CD14-positive monocyte (primary cell): ENCODE measurements at regions of chr18 and their contacts with region 1.

Region 1: GRCh38 chr18:48767090-48767690 is 183.6 kb downstream of the SMAD7 start:
- DNase-seq: no peak
- H3K4me3 ChIP-seq: no peak overlapping the region
- H3K4me3 Mint-ChIP-seq: no peak overlapping the region
- H3K27ac ChIP-seq: no peak overlapping the region
- H3K27ac Mint-ChIP-seq: no peak overlapping the region
- H3K4me1 ChIP-seq: peaks cover 8 to 15% of the 10 kb centered on the region in 2 donors
- H3K4me1 Mint-ChIP-seq: peaks cover 19% of the 10 kb centered on the region
- H3K27me3 ChIP-seq: no peaks in the 10 kb centered on the region
- H3K27me3 Mint-ChIP-seq: peaks cover 0 to 5% (median 2%) of the 10 kb centered on the region in 3 donors
- CTCF ChIP-seq: no peak

Region 2: GRCh38 chr18:48687346-48688042 is 79.7 kb before region 1 on chr18:
- intact Hi-C with region 1: loop called in 1 of 2 experiments (anchors 5 kb)
- DNase-seq: no peak
- H3K4me3 ChIP-seq: no peak overlapping the region
- H3K4me3 Mint-ChIP-seq: no peak overlapping the region
- H3K27ac ChIP-seq: no peak overlapping the region
- H3K27ac Mint-ChIP-seq: peak overlapping the region in 2 of 7 donors; percentile 15 to 37
- H3K4me1 ChIP-seq: no peaks in the 10 kb centered on the region
- H3K4me1 Mint-ChIP-seq: peaks cover 9% of the 10 kb centered on the region
- H3K27me3 ChIP-seq: no peaks in the 10 kb centered on the region
- H3K27me3 Mint-ChIP-seq: peaks cover 0 to 2% (median 0%) of the 10 kb centered on the region in 3 donors
- CTCF ChIP-seq: no peak

Region 3: GRCh38 chr18:48709371-48710062 is 57.7 kb before region 1 on chr18:
- intact Hi-C with region 1: loop called in 1 of 2 experiments (anchors 10 kb)
- DNase-seq: no peak
- H3K4me3 ChIP-seq: no peak overlapping the region
- H3K4me3 Mint-ChIP-seq: no peak overlapping the region
- H3K27ac ChIP-seq: no peak overlapping the region
- H3K27ac Mint-ChIP-seq: no peak overlapping the region
- H3K4me1 ChIP-seq: peaks cover 20 to 22% of the 10 kb centered on the region in 2 donors
- H3K4me1 Mint-ChIP-seq: peaks cover 33% of the 10 kb centered on the region
- H3K27me3 ChIP-seq: no peaks in the 10 kb centered on the region
- H3K27me3 Mint-ChIP-seq: peaks cover 0 to 5% (median 4%) of the 10 kb centered on the region in 3 donors
- CTCF ChIP-seq: no peak